CD8-positive, alpha-beta T cell (primary cell): ENCODE measurements at regions of chr3 and their contacts with region 1.

Region 1: DNA sequence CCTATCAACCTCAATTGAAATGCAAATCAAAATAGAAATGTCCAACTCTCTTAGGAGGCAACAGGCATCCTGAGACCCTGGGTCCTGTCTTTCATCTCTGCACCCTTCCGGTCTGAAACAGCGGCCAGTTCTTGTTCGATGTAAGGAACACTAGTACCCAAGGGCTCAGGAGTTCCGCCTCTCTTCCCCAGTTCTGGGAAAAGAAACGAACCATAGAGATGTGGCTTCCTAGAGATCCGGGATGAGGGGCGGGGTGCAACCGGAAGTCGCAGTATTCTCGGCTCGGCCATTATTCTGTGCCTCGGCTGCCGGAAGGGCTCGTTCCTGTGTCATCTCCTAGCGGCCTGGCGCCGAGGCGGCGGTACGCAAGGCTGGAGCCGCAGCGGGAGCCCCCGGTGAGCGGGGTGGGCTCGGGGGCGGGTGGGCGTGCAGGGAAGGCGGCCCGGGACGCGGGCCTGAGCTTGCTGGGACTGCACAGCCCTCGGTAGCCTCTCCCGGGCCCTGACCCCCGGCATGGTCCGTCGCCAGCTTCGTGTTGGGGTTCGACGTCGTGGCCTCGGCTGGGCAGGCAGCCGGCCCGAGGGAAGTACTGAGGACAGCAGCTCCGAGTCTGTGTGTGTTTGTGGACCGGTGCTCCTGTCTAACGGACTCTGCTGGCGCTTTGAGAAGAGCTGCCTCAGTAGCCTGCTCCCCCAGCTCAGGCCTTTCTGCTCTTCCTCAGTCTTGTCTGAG is at the start of gene ZNF197:
- DNase-seq: peak in 8 of 9 experiments; percentile 42 to 76 (median 55)
- ATAC-seq: peak; percentile 76
- H3K4me3 ChIP-seq: peak within 1 kb of the TSS; percentile 66 to 70
- H3K4me3 Mint-ChIP-seq: peak within 1 kb of the TSS; percentile 88
- H3K27ac ChIP-seq: peak within 1 kb of the TSS; percentile 49 to 60
- H3K27ac Mint-ChIP-seq: peak within 1 kb of the TSS; percentile 80
- H3K4me1 ChIP-seq: peaks cover 13% of the 10 kb centered on the region
- H3K4me1 Mint-ChIP-seq: peaks cover 46% of the 10 kb centered on the region
- H3K27me3 ChIP-seq: no peaks in the 10 kb centered on the region
- H3K27me3 Mint-ChIP-seq: no peaks in the 10 kb centered on the region
- CTCF ChIP-seq: no peak
- total RNA-seq, gene ZNF197: 2.9 to 3.5 TPM

Region 2: DNA sequence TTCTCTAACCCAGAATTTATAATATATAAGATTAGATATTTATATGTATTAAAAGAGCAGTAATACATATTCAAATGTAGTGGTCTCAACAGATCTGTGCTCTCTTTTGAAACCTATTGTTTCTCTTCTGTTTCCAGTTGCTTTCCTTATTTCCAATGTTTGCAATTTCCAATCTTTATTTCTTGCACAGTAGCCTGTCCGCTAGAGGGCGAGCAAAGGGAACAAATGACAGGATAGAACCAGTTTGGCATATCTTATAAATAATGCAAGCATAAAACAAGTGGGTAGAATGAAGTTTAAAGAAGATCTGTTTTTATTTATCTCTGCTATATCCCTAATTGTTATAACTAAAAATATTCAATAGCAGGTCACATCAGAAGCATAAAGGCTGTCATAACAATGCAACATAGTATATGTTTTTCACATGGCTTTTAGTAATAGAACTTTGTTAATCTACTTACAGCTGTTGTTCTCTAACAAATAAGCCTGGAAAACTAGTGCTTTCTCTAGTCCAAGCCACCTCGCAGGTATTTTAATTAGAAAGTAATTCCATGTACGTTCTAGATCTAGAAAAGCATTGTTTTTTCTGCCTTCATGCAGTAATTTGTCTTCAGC is 301.5 kb before region 1 on chr3:
- CTCF ChIA-PET with region 1: no interaction called
- POLR2A ChIA-PET with region 1: no interaction called
- intact Hi-C with region 1: loop called in 1 of 2 experiments (anchors 2 kb)
- DNase-seq: peak; percentile 6 to 68 (median 58)
- ATAC-seq: no peak
- H3K4me3 ChIP-seq: no peak overlapping the region
- H3K4me3 Mint-ChIP-seq: no peak overlapping the region
- H3K27ac ChIP-seq: no peak overlapping the region
- H3K27ac Mint-ChIP-seq: no peak overlapping the region
- H3K4me1 ChIP-seq: no peaks in the 10 kb centered on the region
- H3K4me1 Mint-ChIP-seq: no peaks in the 10 kb centered on the region
- H3K27me3 ChIP-seq: peaks cover 0 to 3% of the 10 kb centered on the region in 2 experiments
- H3K27me3 Mint-ChIP-seq: peaks cover 9% of the 10 kb centered on the region
- CTCF ChIP-seq: peak; percentile 86

Region 3: DNA sequence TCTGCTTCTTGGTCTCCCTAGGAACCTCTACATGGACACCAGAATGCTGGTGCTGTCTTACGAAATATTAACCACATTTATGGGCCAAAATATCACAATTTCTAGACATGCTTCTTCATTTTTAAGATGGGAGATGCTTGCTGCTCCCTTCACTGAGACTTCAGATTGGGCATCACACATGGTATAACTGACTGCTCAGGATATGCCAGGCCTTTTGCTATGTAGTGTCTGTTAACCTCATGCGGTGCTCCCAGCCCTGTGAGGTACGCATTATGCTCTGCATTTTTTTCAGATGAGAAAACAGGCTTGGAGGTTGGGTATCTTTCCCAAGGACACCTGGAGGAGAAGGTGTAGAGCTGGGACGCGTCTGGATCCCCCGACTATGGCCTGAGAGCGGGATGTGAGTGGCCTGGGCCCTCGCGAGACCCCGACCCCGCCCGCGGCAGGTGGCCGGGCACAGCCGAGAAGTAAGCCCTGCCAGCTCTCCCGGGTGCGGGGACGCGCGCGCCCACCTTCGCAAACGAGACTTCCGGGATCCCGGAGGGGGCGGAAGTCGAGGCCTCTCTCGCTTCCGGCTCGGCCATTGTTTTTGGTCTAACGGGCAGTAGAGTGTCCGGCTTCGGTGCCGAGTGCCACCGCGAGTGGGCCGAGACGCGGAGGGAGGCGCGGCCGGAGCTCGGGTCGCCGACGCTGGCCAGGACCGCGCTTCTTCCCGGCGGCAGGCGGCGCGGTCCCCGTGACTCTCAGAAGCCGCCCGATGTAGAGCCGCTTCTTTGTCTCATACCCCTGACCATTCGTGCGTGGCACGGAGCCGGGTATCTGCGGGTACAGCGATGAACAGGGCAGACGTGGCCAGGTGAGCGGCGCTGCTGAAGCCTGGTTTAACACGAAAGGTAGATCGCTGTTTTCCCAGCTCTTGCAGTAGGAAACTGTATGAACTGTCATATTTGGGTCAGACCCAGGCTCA is 70.0 kb before region 1 on chr3 and contains the start of gene ZKSCAN7:
- CTCF ChIA-PET with region 1: no interaction called
- POLR2A ChIA-PET with region 1: no interaction called
- intact Hi-C with region 1: loop called in 1 of 2 experiments (anchors 2 kb)
- DNase-seq: peak; percentile 20 to 79 (median 51)
- ATAC-seq: peak; percentile 74
- H3K4me3 ChIP-seq: peak within 1 kb of the TSS; percentile 76 to 88
- H3K4me3 Mint-ChIP-seq: peak within 1 kb of the TSS; percentile 93
- H3K27ac ChIP-seq: peak within 1 kb of the TSS; percentile 58 to 74
- H3K27ac Mint-ChIP-seq: peak within 1 kb of the TSS; percentile 92
- H3K4me1 ChIP-seq: peaks cover 9% of the 10 kb centered on the region
- H3K4me1 Mint-ChIP-seq: peaks cover 30% of the 10 kb centered on the region
- H3K27me3 ChIP-seq: no peaks in the 10 kb centered on the region
- H3K27me3 Mint-ChIP-seq: peaks cover 9% of the 10 kb centered on the region
- CTCF ChIP-seq: no peak
- total RNA-seq, gene ZKSCAN7: 0.68 to 1.6 TPM

Region 4: GRCh38 chr3:44612678-44613077 is 12.2 kb before region 1 on chr3:
- CTCF ChIA-PET with region 1: no interaction called
- POLR2A ChIA-PET with region 1: no interaction called
- intact Hi-C with region 1: no loop called
- DNase-seq: no peak
- ATAC-seq: no peak
- H3K4me3 ChIP-seq: no peak overlapping the region
- H3K4me3 Mint-ChIP-seq: no peak overlapping the region
- H3K27ac ChIP-seq: no peak overlapping the region
- H3K27ac Mint-ChIP-seq: no peak overlapping the region
- H3K4me1 ChIP-seq: no peaks in the 10 kb centered on the region
- H3K4me1 Mint-ChIP-seq: no peaks in the 10 kb centered on the region
- H3K27me3 ChIP-seq: no peaks in the 10 kb centered on the region
- H3K27me3 Mint-ChIP-seq: no peaks in the 10 kb centered on the region
- CTCF ChIP-seq: no peak